ENCODE measurements at regions of chr3 and their contacts with region 1.

Region 1: GRCh38 chr3:151439652-151440129 is 21.2 kb downstream of the IGSF10 start:
- DNase-seq: no peak
- ATAC-seq: peak; percentile 87
- H3K4me3 ChIP-seq: peak overlapping the region; percentile 2
- H3K27ac ChIP-seq: no peak overlapping the region
- H3K4me1 ChIP-seq: no peaks in the 10 kb centered on the region
- H3K27me3 ChIP-seq: no peaks in the 10 kb centered on the region
- CTCF ChIP-seq: peak; percentile 83

Region 2: DNA sequence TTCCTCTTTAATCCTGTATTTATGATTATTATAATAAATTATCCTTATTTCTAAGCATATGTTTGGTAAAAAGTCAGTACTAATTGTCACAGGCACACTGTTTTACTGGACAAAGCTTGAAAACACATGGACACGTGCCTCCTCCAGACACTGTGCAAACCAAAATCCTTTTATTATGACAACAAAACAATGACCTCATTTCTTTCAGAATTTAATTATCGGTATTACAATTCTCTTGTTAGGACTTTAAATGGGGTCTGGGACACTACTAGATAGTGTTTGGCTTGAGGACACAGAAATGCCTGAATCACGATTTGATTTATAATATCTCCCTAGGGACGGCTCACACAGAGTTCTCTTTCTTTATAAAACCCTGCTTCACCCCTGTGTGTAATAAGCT is 128.5 kb after region 1 on chr3:
- intact Hi-C with region 1: no loop called
- DNase-seq: no peak
- ATAC-seq: no peak
- H3K4me3 ChIP-seq: no peak overlapping the region
- H3K27ac ChIP-seq: no peak overlapping the region
- H3K4me1 ChIP-seq: no peaks in the 10 kb centered on the region
- H3K27me3 ChIP-seq: no peaks in the 10 kb centered on the region
- CTCF ChIP-seq: no peak

Region 3: DNA sequence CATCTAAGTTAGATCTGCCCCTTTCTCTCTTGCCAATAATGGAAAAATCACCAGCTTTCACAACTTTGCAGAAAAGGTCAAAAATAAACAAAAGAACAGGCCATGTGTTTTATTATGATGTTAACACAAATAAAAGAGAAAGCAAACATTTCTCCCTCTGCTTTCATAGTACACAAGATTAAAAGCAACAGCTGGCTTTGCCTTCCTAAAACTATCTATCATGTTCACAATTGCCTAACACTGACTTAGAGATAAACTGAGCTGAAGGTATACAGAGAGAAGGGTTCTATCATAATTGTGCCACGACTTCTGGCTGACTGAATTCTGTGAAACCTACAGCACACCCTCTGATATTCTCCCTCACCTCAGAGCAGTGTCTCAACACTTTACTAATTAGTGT is 403.6 kb after region 1 on chr3:
- intact Hi-C with region 1: loop called (anchors 10 kb)
- DNase-seq: no peak
- ATAC-seq: no peak
- H3K4me3 ChIP-seq: no peak overlapping the region
- H3K27ac ChIP-seq: no peak overlapping the region
- H3K4me1 ChIP-seq: peaks cover 7% of the 10 kb centered on the region
- H3K27me3 ChIP-seq: no peaks in the 10 kb centered on the region
- CTCF ChIP-seq: no peak

Region 4: GRCh38 chr3:151918253-151919029 is 478.8 kb after region 1 on chr3:
- intact Hi-C with region 1: loop called (anchors 10 kb)
- DNase-seq: no peak
- ATAC-seq: peak; percentile 62
- H3K4me3 ChIP-seq: no peak overlapping the region
- H3K27ac ChIP-seq: no peak overlapping the region
- H3K4me1 ChIP-seq: no peaks in the 10 kb centered on the region
- H3K27me3 ChIP-seq: no peaks in the 10 kb centered on the region
- CTCF ChIP-seq: peak; percentile 60